ENCODE measurements at regions of chr13 and their contacts with region 1.

Region 1: GRCh38 chr13:59345316-59345715 is 818.4 kb downstream of the DIAPH3 start:
- DNase-seq: no peak
- H3K4me3 ChIP-seq: no peak overlapping the region
- H3K27ac ChIP-seq: no peak overlapping the region
- H3K4me1 ChIP-seq: no peaks in the 10 kb centered on the region
- H3K27me3 ChIP-seq: no peaks in the 10 kb centered on the region
- CTCF ChIP-seq: no peak
- POLR2A ChIP-seq: no peak

Region 2: GRCh38 chr13:59280297-59280696 is 65.0 kb before region 1 on chr13:
- intact Hi-C with region 1: loop called (anchors 5 kb)
- DNase-seq: no peak
- H3K4me3 ChIP-seq: no peak overlapping the region
- H3K27ac ChIP-seq: no peak overlapping the region
- H3K4me1 ChIP-seq: no peaks in the 10 kb centered on the region
- H3K27me3 ChIP-seq: no peaks in the 10 kb centered on the region
- CTCF ChIP-seq: no peak
- POLR2A ChIP-seq: no peak

Region 3: GRCh38 chr13:59318320-59318930 is 26.9 kb before region 1 on chr13:
- intact Hi-C with region 1: no loop called
- DNase-seq: no peak
- H3K4me3 ChIP-seq: no peak overlapping the region
- H3K27ac ChIP-seq: no peak overlapping the region
- H3K4me1 ChIP-seq: no peaks in the 10 kb centered on the region
- H3K27me3 ChIP-seq: no peaks in the 10 kb centered on the region
- CTCF ChIP-seq: peak in 1 of 3 experiments; percentile 9
- POLR2A ChIP-seq: no peak

Measured in vagina (tissue), 2 donors.